ENCODE measurements at regions of chr4 and their contacts with region 1.

Region 1: GRCh38 chr4:174318829-174319764 is 35.4 kb downstream of the CEP44 start:
- DNase-seq: no peak
- H3K4me3 ChIP-seq: no peak overlapping the region
- H3K27ac ChIP-seq: no peak overlapping the region
- H3K4me1 ChIP-seq: peaks cover 0 to 4% (median 0%) of the 10 kb centered on the region in 4 donors
- H3K27me3 ChIP-seq: no peaks in the 10 kb centered on the region
- CTCF ChIP-seq: peak; percentile 57 to 79 (median 72)
- EP300 ChIP-seq: no peak
- POLR2A ChIP-seq: no peak

Region 2: DNA sequence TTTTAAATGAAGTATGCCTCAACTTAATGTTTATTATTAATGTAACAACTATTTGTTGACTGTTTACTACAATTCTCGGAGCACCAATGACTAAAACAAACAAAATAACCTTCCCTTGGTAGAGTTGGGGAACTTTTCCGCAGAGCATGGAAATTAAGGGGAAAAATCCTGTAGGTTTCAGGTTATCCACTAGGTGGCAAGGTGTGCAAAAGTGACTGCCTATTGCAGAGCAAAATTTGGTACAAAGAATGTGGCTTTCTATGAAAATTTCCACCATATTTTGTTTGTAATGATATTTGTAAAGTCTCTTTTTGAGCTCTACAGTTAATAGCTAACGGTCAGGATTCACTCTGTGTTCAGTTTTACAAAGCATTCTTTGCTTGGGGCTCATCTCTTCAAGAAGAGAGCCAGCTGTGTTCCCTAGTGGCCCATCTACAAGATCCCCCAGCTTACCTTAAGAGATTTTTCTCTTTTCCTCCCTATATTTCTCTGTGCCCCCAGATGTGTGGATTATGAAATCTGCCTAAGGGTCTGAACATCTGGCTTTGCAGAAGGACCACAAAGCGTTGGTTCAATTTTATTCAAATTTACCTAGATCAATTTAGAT is 96.7 kb before region 1 on chr4:
- in situ Hi-C with region 1: loop called in 2 of 4 experiments (anchors 10 to 25 kb)
- intact Hi-C with region 1: no loop called
- DNase-seq: no peak
- H3K4me3 ChIP-seq: no peak overlapping the region
- H3K27ac ChIP-seq: no peak overlapping the region
- H3K4me1 ChIP-seq: peaks cover 0 to 10% (median 7%) of the 10 kb centered on the region in 4 donors
- H3K27me3 ChIP-seq: peaks cover 52% of the 10 kb centered on the region
- CTCF ChIP-seq: peak; percentile 54 to 62 (median 57)
- EP300 ChIP-seq: no peak
- POLR2A ChIP-seq: no peak